CD14-positive monocyte (primary cell): ENCODE measurements at regions of chr15 and their contacts with region 1.

Region 1: DNA sequence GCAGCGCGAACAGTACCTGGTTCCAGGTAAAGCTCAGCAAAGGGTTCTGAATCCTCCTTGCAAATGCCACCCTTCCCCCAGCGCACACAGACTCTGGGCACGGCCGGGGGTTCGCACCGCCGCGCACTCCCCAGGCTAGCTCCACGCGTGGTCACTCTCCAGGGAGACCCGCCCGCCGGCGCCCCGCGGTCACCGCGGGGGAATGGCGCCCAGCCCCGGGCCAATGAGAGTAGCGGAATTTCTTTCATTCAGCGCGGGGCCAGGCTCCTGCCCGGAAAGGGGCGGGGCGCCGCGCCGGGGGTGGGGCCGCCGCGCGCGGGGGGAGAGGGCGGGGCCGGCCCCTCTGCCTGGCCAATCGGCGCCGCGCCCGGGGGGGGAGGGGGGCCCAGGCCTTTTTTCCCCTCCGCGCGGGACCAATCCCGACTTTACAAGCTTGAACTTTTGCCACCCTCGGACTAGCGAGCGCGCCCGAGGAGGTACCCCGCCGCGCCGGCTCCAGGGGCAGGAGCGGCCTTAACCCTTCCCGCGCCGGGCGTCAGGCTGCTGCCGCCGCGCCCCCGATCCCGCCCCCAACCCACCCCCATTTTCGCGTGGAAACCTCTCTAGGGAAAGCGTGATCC is 1.1 kb upstream of the SMAD6 start:
- DNase-seq: peak; percentile 88 to 89 (median 88)
- H3K4me3 ChIP-seq: peak overlapping the region; percentile 63 to 97 (median 84)
- H3K4me3 Mint-ChIP-seq: peak overlapping the region; percentile 84 to 94
- H3K27ac ChIP-seq: peak overlapping the region; percentile 66 to 83
- H3K27ac Mint-ChIP-seq: peak overlapping the region; percentile 57 to 94 (median 90)
- H3K4me1 ChIP-seq: peaks cover 28 to 39% of the 10 kb centered on the region in 2 donors
- H3K4me1 Mint-ChIP-seq: peaks cover 31% of the 10 kb centered on the region
- H3K27me3 ChIP-seq: peaks cover 11 to 26% of the 10 kb centered on the region in 2 donors
- H3K27me3 Mint-ChIP-seq: peaks cover 26 to 33% (median 26%) of the 10 kb centered on the region in 3 donors
- CTCF ChIP-seq: no peak

Region 2: GRCh38 chr15:66386204-66387123 is 314.4 kb before region 1 on chr15 and contains the start of gene MAP2K1:
- intact Hi-C with region 1: loop called in 1 of 2 experiments (anchors 10 kb)
- DNase-seq: peak; percentile 95 to 98 (median 98)
- H3K4me3 ChIP-seq: peak within 1 kb of the TSS; percentile 86 to 95 (median 93)
- H3K4me3 Mint-ChIP-seq: peak within 1 kb of the TSS; percentile 96 to 100
- H3K27ac ChIP-seq: peak within 1 kb of the TSS; percentile 59 to 89
- H3K27ac Mint-ChIP-seq: peak within 1 kb of the TSS; percentile 94 to 98 (median 97)
- H3K4me1 ChIP-seq: peaks cover 53 to 58% of the 10 kb centered on the region in 2 donors
- H3K4me1 Mint-ChIP-seq: peaks cover 56% of the 10 kb centered on the region
- H3K27me3 ChIP-seq: no peaks in the 10 kb centered on the region
- H3K27me3 Mint-ChIP-seq: no peaks in the 10 kb centered on the region
- CTCF ChIP-seq: peak; percentile 75
- polyA plus RNA-seq, gene MAP2K1: 41.3 to 71.1 (median 64.5) TPM

Region 3: DNA sequence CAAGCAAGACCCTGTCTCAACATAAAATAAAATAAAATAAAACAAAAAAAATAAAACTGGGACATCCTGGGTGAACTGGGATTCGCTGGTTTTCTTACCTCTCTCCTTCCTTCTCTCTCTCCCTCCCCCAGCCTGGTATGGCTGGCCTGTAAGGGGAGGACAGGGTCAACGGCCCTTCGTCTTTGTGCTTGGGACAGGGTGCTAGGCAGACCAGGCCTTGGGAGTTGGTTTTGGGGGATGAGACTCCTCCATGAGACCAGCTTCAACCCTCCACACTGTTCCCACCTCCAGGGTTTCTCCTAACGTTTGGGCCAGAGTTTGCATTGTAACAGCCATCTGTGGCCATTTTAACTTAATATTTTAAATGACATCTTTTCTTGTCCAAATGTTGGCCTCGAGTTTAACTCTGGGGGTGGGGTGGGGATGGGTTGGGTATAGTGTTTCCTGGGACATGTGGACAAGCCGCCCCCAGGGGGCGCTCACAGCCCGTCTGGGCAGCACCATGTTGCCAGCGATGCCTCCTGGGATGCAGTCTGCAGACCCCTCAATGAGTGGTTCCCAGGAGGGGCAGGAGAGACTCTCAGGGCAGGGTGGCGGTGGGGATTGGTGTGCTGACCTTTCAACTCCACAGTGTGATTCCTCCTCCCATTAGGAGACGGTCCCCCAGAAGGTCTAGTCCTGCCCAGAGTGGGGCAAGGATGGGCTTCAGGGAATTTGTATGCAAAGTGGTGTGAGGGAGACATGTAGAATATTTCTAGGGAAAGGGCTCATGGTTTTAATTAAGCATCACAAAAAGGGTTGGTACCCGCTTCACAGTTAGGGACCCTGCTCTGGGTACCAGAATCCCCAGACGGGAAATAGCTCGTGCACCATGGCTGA is 97.4 kb before region 1 on chr15:
- intact Hi-C with region 1: loop called in 1 of 2 experiments (anchors 5 kb)
- DNase-seq: peak; percentile 59 to 77 (median 66)
- H3K4me3 ChIP-seq: no peak overlapping the region
- H3K4me3 Mint-ChIP-seq: no peak overlapping the region
- H3K27ac ChIP-seq: no peak overlapping the region
- H3K27ac Mint-ChIP-seq: peak overlapping the region in 1 of 7 donors; percentile 80
- H3K4me1 ChIP-seq: no peaks in the 10 kb centered on the region
- H3K4me1 Mint-ChIP-seq: no peaks in the 10 kb centered on the region
- H3K27me3 ChIP-seq: no peaks in the 10 kb centered on the region
- H3K27me3 Mint-ChIP-seq: peaks cover 2 to 12% (median 3%) of the 10 kb centered on the region in 3 donors
- CTCF ChIP-seq: peak; percentile 90

Region 4: DNA sequence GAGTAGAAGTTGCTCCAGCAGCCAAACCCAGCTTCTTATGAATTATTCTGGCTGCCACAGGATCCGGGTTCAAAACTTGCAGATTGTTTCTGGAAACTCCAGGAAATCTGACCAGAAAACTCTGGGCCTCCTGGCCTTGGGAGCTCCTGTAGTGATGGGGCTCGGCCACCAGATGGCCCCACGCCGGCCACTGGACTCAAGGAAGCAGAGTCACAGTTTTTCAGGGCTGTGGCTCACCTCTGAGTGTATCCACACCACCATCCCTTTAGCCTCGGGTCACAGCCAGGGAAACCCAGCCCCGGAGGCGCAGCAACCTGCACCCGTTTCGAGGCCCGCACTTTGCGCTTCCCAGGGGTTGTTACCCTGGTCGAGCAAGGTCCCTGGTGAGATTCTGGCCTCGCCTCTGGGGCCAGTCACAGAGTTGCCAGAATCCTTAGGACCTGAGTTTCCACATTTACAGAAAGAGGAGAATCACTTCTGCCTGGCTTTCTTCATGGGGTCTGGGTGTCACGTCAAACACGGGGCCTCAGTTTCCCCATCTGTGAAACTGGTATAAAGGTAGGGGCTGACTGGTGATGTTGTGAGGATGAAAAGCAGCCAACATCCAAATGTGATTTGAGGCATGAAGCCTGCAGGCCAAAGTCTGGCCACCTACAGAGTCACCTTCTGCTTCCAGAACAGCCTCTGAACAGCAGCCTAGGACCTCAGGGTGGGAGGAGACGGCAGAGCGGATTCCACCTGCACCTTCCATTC is 81.6 kb before region 1 on chr15:
- intact Hi-C with region 1: loop called in 1 of 2 experiments (anchors 5 kb)
- DNase-seq: peak; percentile 52 to 73 (median 70)
- H3K4me3 ChIP-seq: no peak overlapping the region
- H3K4me3 Mint-ChIP-seq: no peak overlapping the region
- H3K27ac ChIP-seq: peak overlapping the region in 1 of 2 donors; percentile 34
- H3K27ac Mint-ChIP-seq: peak overlapping the region in 3 of 7 donors; percentile 40 to 79 (median 60)
- H3K4me1 ChIP-seq: peaks cover 65 to 69% of the 10 kb centered on the region in 2 donors
- H3K4me1 Mint-ChIP-seq: peaks cover 70% of the 10 kb centered on the region
- H3K27me3 ChIP-seq: peaks cover 0 to 6% of the 10 kb centered on the region in 2 donors
- H3K27me3 Mint-ChIP-seq: peaks cover 3 to 14% (median 5%) of the 10 kb centered on the region in 3 donors
- CTCF ChIP-seq: peak; percentile 94

Region 5: GRCh38 chr15:66841953-66842681 is 141.2 kb after region 1 on chr15:
- intact Hi-C with region 1: loop called (anchors 5 to 10 kb)
- DNase-seq: peak; percentile 61 to 75 (median 66)
- H3K4me3 ChIP-seq: peak overlapping the region; percentile 21 to 72 (median 46)
- H3K4me3 Mint-ChIP-seq: peak overlapping the region; percentile 74 to 88
- H3K27ac ChIP-seq: peak overlapping the region; percentile 80 to 82
- H3K27ac Mint-ChIP-seq: peak overlapping the region; percentile 88 to 96 (median 92)
- H3K4me1 ChIP-seq: peaks cover 33 to 39% of the 10 kb centered on the region in 2 donors
- H3K4me1 Mint-ChIP-seq: peaks cover 39% of the 10 kb centered on the region
- H3K27me3 ChIP-seq: no peaks in the 10 kb centered on the region
- H3K27me3 Mint-ChIP-seq: peaks cover 0 to 9% (median 5%) of the 10 kb centered on the region in 3 donors
- CTCF ChIP-seq: no peak